Endothelial cell of umbilical vein (primary cell): ENCODE measurements at regions of chr4 and their contacts with region 1.

Region 1: DNA sequence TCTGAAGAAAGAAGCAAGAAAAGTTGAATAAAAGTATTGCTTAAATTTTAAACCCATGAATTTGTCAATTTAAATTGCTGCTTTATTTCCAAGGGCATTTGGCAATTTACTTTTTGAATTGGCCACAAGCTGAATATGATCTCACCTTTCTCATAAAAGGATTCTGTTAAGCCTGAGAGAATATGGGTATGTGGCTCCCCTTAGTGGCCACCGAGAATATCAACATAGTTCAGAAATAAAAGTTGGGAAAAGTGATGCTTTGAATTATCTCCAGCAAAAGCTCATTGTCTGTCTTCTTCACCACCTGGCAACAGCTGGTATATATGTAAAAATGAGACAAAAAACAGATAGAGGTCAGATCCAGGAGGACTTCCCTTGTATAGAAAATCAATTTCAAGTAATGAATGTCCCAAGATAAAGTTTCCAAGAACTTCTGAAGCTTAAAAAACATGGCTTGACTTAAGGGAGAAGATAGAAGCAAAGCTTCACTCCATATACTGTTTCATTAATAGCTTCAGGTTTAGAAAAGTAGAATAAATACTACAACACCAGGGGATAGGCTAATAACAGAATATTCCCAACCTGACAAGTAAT is 290.7 kb upstream of the FAM241A start:
- DNase-seq: peak; percentile 39
- H3K4me3 ChIP-seq: no peak overlapping the region
- H3K27ac ChIP-seq: no peak overlapping the region
- H3K4me1 ChIP-seq: no peaks in the 10 kb centered on the region
- H3K27me3 ChIP-seq: peaks cover 0 to 8% of the 10 kb centered on the region in 2 experiments
- CTCF ChIP-seq: peak; percentile 34 to 49
- POLR2A ChIP-seq: no peak

Region 2: DNA sequence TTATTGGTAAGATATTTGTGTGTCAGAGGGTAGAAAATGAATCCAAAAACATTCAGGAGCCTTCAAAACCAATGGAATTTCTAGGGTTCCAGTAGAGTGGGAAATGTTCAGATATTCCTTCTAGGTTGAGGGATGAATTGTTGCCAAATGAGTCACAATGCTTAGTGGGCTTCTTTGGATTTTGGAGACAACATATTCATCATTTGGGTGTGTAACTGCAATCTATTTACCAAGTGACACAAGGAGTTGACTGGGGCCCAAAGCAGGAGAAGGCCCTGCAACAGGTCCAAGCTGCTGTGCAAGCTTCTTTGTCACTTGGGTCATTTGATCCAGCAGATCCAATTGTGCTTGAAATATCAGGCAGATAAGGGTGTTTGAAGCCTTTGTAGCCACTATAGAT is 680.3 kb before region 1 on chr4:
- CTCF ChIA-PET with region 1: no interaction called
- POLR2A ChIA-PET with region 1: no interaction called
- dilution Hi-C with region 1: no loop called
- intact Hi-C with region 1: no loop called
- DNase-seq: no peak
- H3K4me3 ChIP-seq: no peak overlapping the region
- H3K27ac ChIP-seq: no peak overlapping the region
- H3K4me1 ChIP-seq: no peaks in the 10 kb centered on the region
- H3K27me3 ChIP-seq: no peaks in the 10 kb centered on the region
- CTCF ChIP-seq: no peak
- POLR2A ChIP-seq: no peak

Region 3: DNA sequence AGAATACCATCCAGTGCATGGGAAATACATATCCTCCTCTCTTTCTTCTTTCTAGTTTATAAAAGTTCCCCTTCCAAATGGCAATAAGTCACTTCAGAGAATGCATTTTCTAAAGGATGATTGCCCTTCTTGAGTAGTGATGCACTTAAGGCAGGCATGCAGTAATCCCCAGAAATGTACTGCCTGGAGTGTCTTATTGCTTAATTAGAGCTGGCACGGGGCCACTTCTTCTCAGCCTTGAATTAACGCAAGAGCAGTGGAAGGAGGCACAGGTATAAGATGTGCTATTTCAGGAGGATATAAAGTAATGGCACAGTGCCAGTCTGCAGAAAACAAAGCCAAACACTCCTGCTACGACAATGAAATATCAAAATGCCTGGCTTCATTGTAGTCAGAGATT is 80.7 kb before region 1 on chr4:
- CTCF ChIA-PET with region 1: no interaction called
- POLR2A ChIA-PET with region 1: no interaction called
- dilution Hi-C with region 1: no loop called
- intact Hi-C with region 1: no loop called
- DNase-seq: no peak
- H3K4me3 ChIP-seq: no peak overlapping the region
- H3K27ac ChIP-seq: no peak overlapping the region
- H3K4me1 ChIP-seq: no peaks in the 10 kb centered on the region
- H3K27me3 ChIP-seq: peaks cover 0 to 3% of the 10 kb centered on the region in 2 experiments
- CTCF ChIP-seq: no peak
- POLR2A ChIP-seq: no peak

Region 4: DNA sequence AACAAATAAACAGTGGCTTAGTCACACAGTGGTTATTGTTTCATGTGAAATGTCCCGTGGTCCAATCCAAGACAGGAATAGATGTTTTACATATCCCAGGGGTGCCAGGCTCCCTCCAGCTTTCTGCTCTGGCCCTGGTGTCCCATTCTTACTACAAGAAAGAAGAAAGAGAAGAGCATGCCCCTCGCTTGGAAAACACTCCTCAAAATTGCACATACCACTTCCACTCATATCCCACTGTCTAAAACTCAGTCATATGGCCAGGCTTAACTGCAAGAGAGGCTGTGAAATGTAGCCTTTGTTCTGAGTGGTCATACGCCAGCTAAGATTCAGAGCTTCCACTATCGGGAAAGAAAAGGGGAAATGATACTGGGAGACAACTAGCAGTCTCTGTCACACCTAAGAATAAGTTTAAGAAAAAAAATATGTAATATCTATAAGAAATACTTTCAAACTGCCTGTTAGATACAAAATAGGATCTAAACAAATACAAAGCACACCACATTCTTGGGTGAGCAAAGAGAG is 16.1 kb before region 1 on chr4:
- CTCF ChIA-PET with region 1: interaction called, 15 read pairs
- POLR2A ChIA-PET with region 1: no interaction called
- dilution Hi-C with region 1: no loop called
- intact Hi-C with region 1: no loop called
- DNase-seq: no peak
- H3K4me3 ChIP-seq: no peak overlapping the region
- H3K27ac ChIP-seq: no peak overlapping the region
- H3K4me1 ChIP-seq: no peaks in the 10 kb centered on the region
- H3K27me3 ChIP-seq: peaks cover 0 to 2% of the 10 kb centered on the region in 2 experiments
- CTCF ChIP-seq: no peak
- POLR2A ChIP-seq: no peak

Region 5: GRCh38 chr4:111869344-111869743 is 14.8 kb after region 1 on chr4:
- CTCF ChIA-PET with region 1: interaction called, 14 read pairs
- POLR2A ChIA-PET with region 1: no interaction called
- dilution Hi-C with region 1: no loop called
- intact Hi-C with region 1: no loop called
- DNase-seq: no peak
- H3K4me3 ChIP-seq: no peak overlapping the region
- H3K27ac ChIP-seq: no peak overlapping the region
- H3K4me1 ChIP-seq: no peaks in the 10 kb centered on the region
- H3K27me3 ChIP-seq: no peaks in the 10 kb centered on the region
- CTCF ChIP-seq: no peak
- POLR2A ChIP-seq: no peak

Region 6: GRCh38 chr4:112060212-112060611 is 205.6 kb after region 1 on chr4:
- CTCF ChIA-PET with region 1: interaction called, 14 read pairs
- POLR2A ChIA-PET with region 1: no interaction called
- dilution Hi-C with region 1: no loop called
- intact Hi-C with region 1: no loop called
- DNase-seq: peak; percentile 59
- H3K4me3 ChIP-seq: no peak overlapping the region
- H3K27ac ChIP-seq: no peak overlapping the region
- H3K4me1 ChIP-seq: peaks cover 9% of the 10 kb centered on the region
- H3K27me3 ChIP-seq: no peaks in the 10 kb centered on the region
- CTCF ChIP-seq: peak; percentile 45 to 58
- POLR2A ChIP-seq: no peak